Ascending aorta (tissue), 2 donors: ENCODE measurements at regions of chr7 and their contacts with region 1.

Region 1: GRCh38 chr7:82729172-82730030 is 285.8 kb upstream of the CACNA2D1 start:
- DNase-seq: no peak
- H3K4me3 ChIP-seq: no peak overlapping the region
- H3K27ac ChIP-seq: no peak overlapping the region
- H3K4me1 ChIP-seq: no peaks in the 10 kb centered on the region
- H3K27me3 ChIP-seq: no peaks in the 10 kb centered on the region
- CTCF ChIP-seq: no peak

Region 2: DNA sequence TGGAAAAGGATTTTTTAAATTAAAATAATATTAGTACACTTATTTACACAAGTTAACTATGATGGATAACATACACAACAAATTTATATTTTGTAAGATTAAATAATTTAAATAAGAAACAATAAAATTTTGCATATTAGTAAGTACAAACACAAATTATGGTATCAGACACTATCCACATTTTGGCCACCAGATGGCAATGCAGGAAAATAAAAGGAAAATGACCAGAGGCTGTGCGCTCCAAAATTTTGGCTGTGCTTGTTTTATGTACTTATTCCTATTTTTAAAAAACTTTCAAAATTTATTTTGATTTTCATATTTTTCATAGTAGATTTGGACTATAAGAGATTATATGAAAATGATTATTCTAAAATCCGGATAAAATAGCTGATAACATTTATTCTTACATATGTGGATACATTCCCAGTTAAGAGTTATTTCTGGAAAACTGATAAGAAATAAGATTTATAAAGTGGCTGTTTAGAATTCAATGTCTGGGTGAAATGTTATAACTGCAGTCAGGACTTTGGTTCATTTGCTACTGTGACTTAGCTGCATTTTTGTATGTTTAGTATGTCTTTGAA is 684.8 kb before region 1 on chr7:
- intact Hi-C with region 1: loop called (anchors 10 kb)
- DNase-seq: no peak
- H3K4me3 ChIP-seq: no peak overlapping the region
- H3K27ac ChIP-seq: no peak overlapping the region
- H3K4me1 ChIP-seq: peaks cover 0 to 3% of the 10 kb centered on the region in 2 donors
- H3K27me3 ChIP-seq: no peaks in the 10 kb centered on the region
- CTCF ChIP-seq: peak; percentile 30 to 73 (median 61)